Ovary (tissue), 10 donors: ENCODE measurements at regions of chrX and their contacts with region 1.

Region 1: DNA sequence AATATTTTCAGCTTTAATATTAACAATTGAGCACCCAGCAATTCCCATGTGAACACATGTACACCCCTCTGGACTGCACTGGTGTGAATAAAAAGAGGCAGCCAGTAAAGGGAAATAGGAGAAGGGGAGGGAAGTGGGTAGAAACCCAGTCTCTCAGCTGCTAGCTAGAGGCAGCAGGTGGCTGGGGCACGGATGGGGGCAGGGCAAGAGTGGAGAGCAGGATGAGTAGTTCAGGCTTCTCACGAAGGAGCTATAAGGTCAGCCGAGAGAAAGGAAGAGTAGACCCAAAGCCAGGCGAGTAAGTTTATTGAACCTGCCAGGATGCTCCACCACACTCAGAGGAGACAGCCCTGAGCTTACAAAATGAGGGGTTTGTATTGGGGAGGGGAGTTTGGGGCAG is 184.8 kb upstream of the MTMR8 start:
- DNase-seq: no peak
- H3K4me3 ChIP-seq: no peak overlapping the region
- H3K27ac ChIP-seq: no peak overlapping the region
- H3K4me1 ChIP-seq: no peaks in the 10 kb centered on the region
- H3K27me3 ChIP-seq: no peaks in the 10 kb centered on the region
- CTCF ChIP-seq: no peak
- EP300 ChIP-seq: no peak
- POLR2A ChIP-seq: no peak

Region 2: GRCh38 chrX:63012574-63012973 is 1567.5 kb before region 1 on chrX:
- intact Hi-C with region 1: no loop called
- DNase-seq: no peak
- H3K4me3 ChIP-seq: no peak overlapping the region
- H3K27ac ChIP-seq: no peak overlapping the region
- H3K4me1 ChIP-seq: no peaks in the 10 kb centered on the region
- H3K27me3 ChIP-seq: no peaks in the 10 kb centered on the region
- CTCF ChIP-seq: no peak
- EP300 ChIP-seq: no peak
- POLR2A ChIP-seq: no peak

Region 3: DNA sequence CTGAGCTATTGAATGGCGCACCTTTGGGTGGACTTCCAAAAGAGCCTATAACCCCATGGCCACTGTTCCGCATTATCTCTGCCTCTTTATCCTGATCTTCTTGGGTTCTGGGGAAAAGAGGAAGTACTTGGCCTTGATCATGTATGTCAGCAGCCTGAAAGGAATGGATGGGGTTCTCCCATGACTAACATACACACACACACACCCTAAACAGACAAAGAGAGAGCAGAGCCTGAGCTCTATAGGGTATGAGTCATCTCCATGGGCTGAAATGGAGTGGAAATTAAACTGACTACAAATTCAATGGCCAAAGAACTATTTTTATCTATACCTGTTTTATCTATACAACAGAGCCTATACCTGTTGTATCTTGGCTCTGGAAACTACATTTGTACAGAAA is 43.3 kb before region 1 on chrX:
- intact Hi-C with region 1: loop called in 1 of 4 experiments (anchors 5 kb)
- DNase-seq: no peak
- H3K4me3 ChIP-seq: no peak overlapping the region
- H3K27ac ChIP-seq: no peak overlapping the region
- H3K4me1 ChIP-seq: no peaks in the 10 kb centered on the region
- H3K27me3 ChIP-seq: no peaks in the 10 kb centered on the region
- CTCF ChIP-seq: no peak
- EP300 ChIP-seq: no peak
- POLR2A ChIP-seq: no peak

Region 4: GRCh38 chrX:64642482-64642881 is 62.4 kb after region 1 on chrX:
- intact Hi-C with region 1: no loop called
- DNase-seq: no peak
- H3K4me3 ChIP-seq: no peak overlapping the region
- H3K27ac ChIP-seq: no peak overlapping the region
- H3K4me1 ChIP-seq: no peaks in the 10 kb centered on the region
- H3K27me3 ChIP-seq: no peaks in the 10 kb centered on the region
- CTCF ChIP-seq: no peak
- EP300 ChIP-seq: no peak
- POLR2A ChIP-seq: no peak